CD4-positive, alpha-beta T cell (primary cell): ENCODE measurements at regions of chr6 and their contacts with region 1.

Region 1: DNA sequence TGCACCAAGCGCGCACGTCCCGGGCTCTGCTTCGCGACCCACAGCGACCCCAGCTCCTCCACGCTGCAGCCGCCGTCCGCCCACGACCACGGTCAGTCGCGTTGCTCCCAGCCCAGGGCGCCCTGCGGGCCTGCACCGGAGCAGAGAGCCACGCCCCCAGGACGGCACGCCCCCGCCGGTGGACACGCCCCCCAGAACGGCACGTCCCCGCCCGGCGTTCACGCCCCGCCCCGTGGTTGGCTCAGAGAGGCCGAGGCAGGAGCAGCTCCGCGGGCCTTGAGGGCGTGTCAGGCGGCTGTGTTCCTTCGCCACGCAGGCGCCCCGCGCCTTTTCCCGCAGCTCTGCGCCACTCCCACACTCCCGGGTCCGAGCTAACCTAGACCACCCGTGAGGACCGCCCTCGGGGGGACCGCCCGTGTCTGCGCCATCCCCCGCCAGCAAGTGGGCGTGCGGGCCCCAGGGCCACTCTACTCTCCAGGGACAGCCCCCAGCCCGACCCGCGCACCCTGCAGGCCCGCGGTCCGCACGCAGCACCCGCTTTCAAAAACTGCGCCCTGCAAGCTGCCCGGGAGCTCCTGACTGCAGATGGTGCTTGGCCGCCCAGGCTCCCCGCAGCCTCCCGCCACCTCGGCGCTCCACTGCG is at the start of gene RNASET2:
- DNase-seq: peak; percentile 96 to 100 (median 99)
- ATAC-seq: peak; percentile 81
- H3K4me3 ChIP-seq: peak within 1 kb of the TSS; percentile 96
- H3K4me3 Mint-ChIP-seq: peak within 1 kb of the TSS; percentile 95
- H3K27ac ChIP-seq: peak within 1 kb of the TSS; percentile 88 to 94
- H3K27ac Mint-ChIP-seq: peak within 1 kb of the TSS; percentile 93
- H3K4me1 ChIP-seq: peaks cover 81% of the 10 kb centered on the region
- H3K4me1 Mint-ChIP-seq: peaks cover 76% of the 10 kb centered on the region
- H3K27me3 ChIP-seq: no peaks in the 10 kb centered on the region
- H3K27me3 Mint-ChIP-seq: no peaks in the 10 kb centered on the region
- CTCF ChIP-seq: no peak
- total RNA-seq, gene RNASET2: 164 to 165 TPM

Region 2: GRCh38 chr6:166936079-166936787 is 20.3 kb before region 1 on chr6:
- CTCF ChIA-PET with region 1: interaction called, 5 read pairs
- POLR2A ChIA-PET with region 1: interaction called, 32 read pairs
- intact Hi-C with region 1: no loop called
- DNase-seq: peak in 3 of 14 experiments; percentile 17 to 62 (median 31)
- ATAC-seq: peak; percentile 51
- H3K4me3 ChIP-seq: no peak overlapping the region
- H3K4me3 Mint-ChIP-seq: peak overlapping the region; percentile 30
- H3K27ac ChIP-seq: peak overlapping the region in 1 of 2 donors; percentile 7
- H3K27ac Mint-ChIP-seq: peak overlapping the region; percentile 30
- H3K4me1 ChIP-seq: peaks cover 35% of the 10 kb centered on the region
- H3K4me1 Mint-ChIP-seq: peaks cover 49% of the 10 kb centered on the region
- H3K27me3 ChIP-seq: no peaks in the 10 kb centered on the region
- H3K27me3 Mint-ChIP-seq: no peaks in the 10 kb centered on the region
- CTCF ChIP-seq: no peak

Region 3: GRCh38 chr6:166969390-166970002 is 12.9 kb after region 1 on chr6:
- CTCF ChIA-PET with region 1: interaction called, 4 read pairs
- POLR2A ChIA-PET with region 1: interaction called, 16 read pairs
- intact Hi-C with region 1: no loop called
- DNase-seq: peak in 4 of 14 experiments; percentile 37 to 54 (median 44)
- ATAC-seq: peak; percentile 37
- H3K4me3 ChIP-seq: peak overlapping the region; percentile 14
- H3K4me3 Mint-ChIP-seq: peak overlapping the region; percentile 35
- H3K27ac ChIP-seq: peak overlapping the region in 1 of 2 donors; percentile 9
- H3K27ac Mint-ChIP-seq: peak overlapping the region; percentile 57
- H3K4me1 ChIP-seq: peaks cover 26% of the 10 kb centered on the region
- H3K4me1 Mint-ChIP-seq: peaks cover 17% of the 10 kb centered on the region
- H3K27me3 ChIP-seq: no peaks in the 10 kb centered on the region
- H3K27me3 Mint-ChIP-seq: no peaks in the 10 kb centered on the region
- CTCF ChIP-seq: no peak

Region 4: DNA sequence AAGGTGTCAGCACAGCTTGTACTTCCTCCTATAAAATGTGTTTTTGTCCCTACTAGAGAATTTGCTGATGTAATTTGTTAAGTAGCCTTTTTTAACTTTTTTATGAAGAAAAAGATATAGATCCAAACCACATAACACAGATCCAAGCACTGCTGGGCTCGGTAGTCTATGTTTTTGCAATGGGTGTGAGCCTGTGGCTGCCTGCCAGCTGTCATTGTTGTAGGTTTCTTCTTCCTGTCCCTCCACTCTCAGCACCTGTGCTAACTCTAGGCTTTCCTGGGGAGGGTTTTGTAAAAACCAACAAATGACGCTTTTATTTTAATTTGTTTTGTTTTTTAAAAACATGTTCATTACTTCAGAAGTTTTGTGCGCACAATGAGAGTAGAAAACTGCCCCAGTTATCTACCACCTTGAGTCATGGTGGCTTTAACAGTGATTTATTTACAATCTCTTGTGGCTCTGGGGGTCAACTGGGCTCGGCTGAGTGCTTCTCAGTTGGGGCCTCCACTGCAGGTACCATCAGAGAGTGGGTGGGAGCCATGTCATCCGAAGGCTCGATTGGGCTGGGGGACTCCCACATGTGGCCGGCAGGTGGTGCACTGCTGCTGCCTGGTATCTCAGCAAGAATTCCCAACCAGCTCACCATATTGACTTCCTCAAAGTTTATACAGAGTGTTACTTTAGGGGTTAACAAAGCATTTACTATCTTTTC is 163.3 kb after region 1 on chr6:
- CTCF ChIA-PET with region 1: no interaction called
- POLR2A ChIA-PET with region 1: interaction called, 13 read pairs
- intact Hi-C with region 1: loop called (anchors 5 kb)
- DNase-seq: peak; percentile 40 to 85 (median 60)
- ATAC-seq: peak; percentile 92
- H3K4me3 ChIP-seq: no peak overlapping the region
- H3K4me3 Mint-ChIP-seq: peak overlapping the region; percentile 32
- H3K27ac ChIP-seq: peak overlapping the region; percentile 51 to 73
- H3K27ac Mint-ChIP-seq: peak overlapping the region; percentile 95
- H3K4me1 ChIP-seq: peaks cover 84% of the 10 kb centered on the region
- H3K4me1 Mint-ChIP-seq: peaks cover 66% of the 10 kb centered on the region
- H3K27me3 ChIP-seq: no peaks in the 10 kb centered on the region
- H3K27me3 Mint-ChIP-seq: no peaks in the 10 kb centered on the region
- CTCF ChIP-seq: no peak